K562 (cell line): ENCODE measurements at regions of chr15 and their contacts with region 1.

Region 1: DNA sequence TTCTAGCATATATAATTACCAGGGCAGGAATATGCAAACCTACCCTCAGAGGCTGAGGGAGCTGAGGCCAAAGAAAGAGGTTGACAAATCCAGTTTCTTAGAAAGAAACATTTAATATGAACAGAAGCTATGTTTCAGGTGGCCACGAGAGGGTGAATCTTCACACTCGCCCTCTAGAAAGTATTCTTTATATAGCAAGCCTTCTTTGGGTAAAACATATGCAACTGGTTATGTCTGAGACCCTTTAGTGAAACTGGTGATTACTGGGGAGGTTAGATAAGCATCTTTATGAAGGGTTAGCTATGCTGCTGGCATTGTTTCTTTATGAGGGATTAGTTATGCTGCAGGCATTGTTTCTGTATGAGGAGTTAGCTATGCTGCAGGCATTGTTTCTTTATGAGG is 50.7 kb upstream of the GOLGA6L2 start:
- DNase-seq: peak; percentile 11 to 39 (median 16)
- ATAC-seq: peak; percentile 55; the same call in 1 of the 3 replicates
- H3K4me3 ChIP-seq: no peak overlapping the region
- H3K27ac ChIP-seq: no peak overlapping the region
- H3K4me1 ChIP-seq: no peaks in the 10 kb centered on the region
- H3K27me3 ChIP-seq: peaks cover 0 to 2% of the 10 kb centered on the region in 2 experiments; a peak in 3 of 5 replicates
- CTCF ChIP-seq: peak; percentile 42 to 64 (median 50); a peak in 5 of 6 replicates
- EP300 ChIP-seq: no peak
- POLR2A ChIP-seq: no peak
- RAD21 ChIP-seq: peak in 1 of 2 experiments; percentile 46; a peak in 2 of 4 replicates

Region 2: DNA sequence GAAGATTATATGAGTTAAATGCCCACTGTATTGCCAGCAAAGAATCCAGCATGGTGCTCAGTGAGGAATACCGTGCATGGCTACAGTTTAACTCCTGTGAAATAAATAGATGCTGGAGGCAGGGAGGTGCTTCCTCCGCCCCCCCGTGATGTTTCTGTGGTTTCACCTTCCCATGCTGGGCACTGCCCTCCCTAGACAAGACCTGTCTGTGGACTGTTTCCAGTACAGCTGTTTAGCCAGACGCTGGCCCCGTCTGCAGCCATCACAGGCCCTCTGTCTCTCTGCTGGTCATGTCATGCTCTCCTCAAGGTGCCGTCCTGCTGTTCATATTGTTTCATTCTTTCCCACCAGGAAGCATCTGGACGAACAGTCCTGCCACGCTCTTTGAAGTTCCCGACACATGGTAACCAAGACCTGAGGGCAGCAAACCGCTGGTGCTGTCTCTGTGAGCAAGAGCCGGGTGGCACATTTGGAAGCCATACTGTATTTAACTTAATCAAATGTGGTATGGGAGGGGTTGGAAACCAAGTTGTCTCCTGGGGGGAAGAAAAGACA is 111.7 kb before region 1 on chr15:
- CTCF ChIA-PET with region 1: no interaction called
- POLR2A ChIA-PET with region 1: no interaction called
- in situ Hi-C with region 1: no loop called
- intact Hi-C with region 1: no loop called
- DNase-seq: no peak
- ATAC-seq: no peak
- H3K4me3 ChIP-seq: no peak overlapping the region
- H3K27ac ChIP-seq: no peak overlapping the region
- H3K4me1 ChIP-seq: no peaks in the 10 kb centered on the region
- H3K27me3 ChIP-seq: peaks cover 6 to 30% of the 10 kb centered on the region in 2 experiments; a peak in 4 of 5 replicates
- CTCF ChIP-seq: no peak
- EP300 ChIP-seq: no peak
- POLR2A ChIP-seq: no peak
- RAD21 ChIP-seq: no peak

Region 3: GRCh38 chr15:23514484-23514883 is 16.8 kb after region 1 on chr15:
- CTCF ChIA-PET with region 1: no interaction called
- POLR2A ChIA-PET with region 1: no interaction called
- in situ Hi-C with region 1: no loop called
- intact Hi-C with region 1: no loop called
- DNase-seq: peak in 1 of 4 experiments; percentile 33
- ATAC-seq: no peak
- H3K4me3 ChIP-seq: no peak overlapping the region
- H3K27ac ChIP-seq: 0 out of 3 replicates have a peak overlapping the region, but pooled peaks have one; percentile 9
- H3K4me1 ChIP-seq: no peaks in the 10 kb centered on the region; a peak in 1 of 5 replicates
- H3K27me3 ChIP-seq: no peaks in the 10 kb centered on the region
- CTCF ChIP-seq: no peak
- EP300 ChIP-seq: no peak
- POLR2A ChIP-seq: no peak
- RAD21 ChIP-seq: no peak

Region 4: GRCh38 chr15:23565395-23566070 is 67.8 kb after region 1 on chr15 and contains the start of gene MKRN3:
- CTCF ChIA-PET with region 1: no interaction called
- POLR2A ChIA-PET with region 1: no interaction called
- in situ Hi-C with region 1: no loop called
- intact Hi-C with region 1: loop called (anchors 10 kb)
- DNase-seq: peak; percentile 83 to 93 (median 86)
- ATAC-seq: peak; percentile 92
- H3K4me3 ChIP-seq: peak within 1 kb of the TSS; percentile 76
- H3K27ac ChIP-seq: peak within 1 kb of the TSS; percentile 80
- H3K4me1 ChIP-seq: peaks cover 6 to 18% of the 10 kb centered on the region in 2 experiments; a peak in 4 of 5 replicates
- H3K27me3 ChIP-seq: peaks cover 0 to 5% of the 10 kb centered on the region in 2 experiments; a peak in 1 of 5 replicates
- CTCF ChIP-seq: no peak
- EP300 ChIP-seq: peak; percentile 59
- POLR2A ChIP-seq: peak; percentile 95
- RAD21 ChIP-seq: no peak
- polyA plus RNA-seq, gene MKRN3: 6.5 to 7.8 TPM

Region 5: DNA sequence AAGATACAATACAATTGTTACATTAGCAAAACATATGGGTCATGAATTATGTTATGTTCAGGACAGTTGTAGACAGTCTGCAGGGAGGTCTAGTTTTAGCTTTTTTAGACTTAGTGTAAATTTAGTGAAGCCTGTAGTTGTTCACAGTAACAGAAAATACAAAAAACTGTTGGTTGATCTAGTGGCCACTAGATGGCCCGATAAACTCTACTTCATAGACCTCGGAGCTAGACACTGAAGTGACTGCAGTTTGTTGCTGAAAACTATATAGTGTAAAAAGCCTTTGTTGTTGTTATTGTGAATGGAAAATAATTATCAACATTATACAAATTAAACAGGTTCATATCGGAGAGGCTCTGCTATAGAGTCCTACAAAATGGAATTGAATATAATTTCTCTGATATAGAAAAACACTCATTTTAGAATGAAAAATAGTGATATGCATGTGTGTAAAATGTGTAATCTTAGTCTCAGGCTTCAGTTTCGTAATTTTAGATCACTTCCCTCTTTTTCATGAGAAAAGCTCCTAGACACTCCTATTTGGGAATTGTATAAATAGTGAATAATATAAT is 131.6 kb after region 1 on chr15:
- CTCF ChIA-PET with region 1: interaction called, 3 read pairs
- POLR2A ChIA-PET with region 1: no interaction called
- in situ Hi-C with region 1: no loop called
- intact Hi-C with region 1: loop called (anchors 2 kb)
- DNase-seq: peak; percentile 10 to 34 (median 15)
- ATAC-seq: peak; percentile 90
- H3K4me3 ChIP-seq: no peak overlapping the region
- H3K27ac ChIP-seq: no peak overlapping the region
- H3K4me1 ChIP-seq: no peaks in the 10 kb centered on the region
- H3K27me3 ChIP-seq: peaks cover 4 to 8% of the 10 kb centered on the region in 2 experiments; a peak in 2 of 5 replicates
- CTCF ChIP-seq: peak; percentile 8 to 57 (median 53); a peak in 5 of 6 replicates
- EP300 ChIP-seq: no peak
- POLR2A ChIP-seq: no peak
- RAD21 ChIP-seq: peak; percentile 23 to 47; a peak in 3 of 4 replicates

Region 6: GRCh38 chr15:23734862-23735261 is 237.2 kb after region 1 on chr15:
- CTCF ChIA-PET with region 1: no interaction called
- POLR2A ChIA-PET with region 1: no interaction called
- in situ Hi-C with region 1: no loop called
- intact Hi-C with region 1: no loop called
- DNase-seq: no peak
- ATAC-seq: no peak
- H3K4me3 ChIP-seq: no peak overlapping the region
- H3K27ac ChIP-seq: no peak overlapping the region
- H3K4me1 ChIP-seq: no peaks in the 10 kb centered on the region
- H3K27me3 ChIP-seq: no peaks in the 10 kb centered on the region
- CTCF ChIP-seq: no peak
- EP300 ChIP-seq: no peak
- POLR2A ChIP-seq: no peak
- RAD21 ChIP-seq: no peak

Region 7: DNA sequence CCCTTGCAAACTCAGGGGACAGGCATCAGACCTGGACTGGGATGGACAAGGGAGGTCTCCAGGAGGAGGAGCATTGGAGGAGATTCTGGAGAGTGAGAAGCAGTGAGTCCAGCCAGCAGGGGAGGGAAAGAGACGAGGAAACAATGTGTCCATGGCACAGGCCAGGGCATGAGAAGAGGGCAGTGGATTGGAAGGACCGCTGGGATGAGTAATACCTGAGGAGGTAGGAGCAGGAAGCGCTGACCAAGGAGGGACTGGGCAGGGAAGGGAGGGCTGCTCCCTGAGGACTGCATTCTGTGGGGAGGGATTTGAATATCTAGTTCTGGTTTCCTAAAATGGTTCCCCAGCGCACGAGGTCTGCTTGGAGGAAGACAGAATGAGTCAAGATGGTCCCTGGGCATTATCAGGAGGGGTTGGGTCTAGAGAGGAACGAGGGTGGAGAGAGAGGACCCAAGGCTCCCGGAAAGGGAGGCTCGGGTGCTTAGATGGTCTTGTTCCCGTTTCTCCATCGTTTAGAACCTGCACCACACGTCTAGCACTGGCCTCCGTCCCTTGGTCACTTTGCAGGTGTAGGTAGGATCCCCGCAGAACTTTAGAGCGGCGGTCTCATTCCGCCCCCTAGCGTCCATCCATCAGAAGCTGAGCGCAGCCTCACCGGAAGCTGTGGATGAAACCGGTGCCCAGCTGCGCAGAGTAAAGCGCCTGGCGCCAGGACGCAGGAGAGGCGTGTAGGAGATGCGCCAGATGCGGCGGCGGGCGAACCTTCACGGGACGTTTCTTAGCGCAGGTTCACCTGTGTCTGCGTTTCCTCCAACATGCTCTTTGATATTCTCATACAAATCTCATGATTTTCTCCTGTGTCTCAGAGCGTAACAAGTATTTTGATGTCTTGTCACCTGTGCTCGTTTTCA is 380.0 kb after region 1 on chr15:
- CTCF ChIA-PET with region 1: no interaction called
- POLR2A ChIA-PET with region 1: no interaction called
- in situ Hi-C with region 1: no loop called
- intact Hi-C with region 1: loop called (anchors 5 kb)
- DNase-seq: peak; percentile 41 to 71 (median 47)
- ATAC-seq: peak; percentile 98
- H3K4me3 ChIP-seq: no peak overlapping the region
- H3K27ac ChIP-seq: no peak overlapping the region
- H3K4me1 ChIP-seq: peaks cover 0 to 4% of the 10 kb centered on the region in 2 experiments; a peak in 2 of 5 replicates
- H3K27me3 ChIP-seq: no peaks in the 10 kb centered on the region
- CTCF ChIP-seq: peak; percentile 70 to 74 (median 74)
- EP300 ChIP-seq: no peak
- POLR2A ChIP-seq: no peak
- RAD21 ChIP-seq: peak; percentile 34 to 62